Esophagus squamous epithelium (tissue), 5 donors: ENCODE measurements at regions of chr9 and their contacts with region 1.

Region 1: GRCh38 chr9:105157130-105157583 is 87.3 kb upstream of the SLC44A1 start:
- DNase-seq: no peak
- H3K4me3 ChIP-seq: no peak overlapping the region
- H3K27ac ChIP-seq: peak overlapping the region in 3 of 4 donors; percentile 19 to 54 (median 52)
- H3K4me1 ChIP-seq: peaks cover 7 to 23% (median 7%) of the 10 kb centered on the region in 3 donors
- H3K27me3 ChIP-seq: no peaks in the 10 kb centered on the region
- CTCF ChIP-seq: peak; percentile 41 to 67 (median 54)
- POLR2A ChIP-seq: no peak

Region 2: DNA sequence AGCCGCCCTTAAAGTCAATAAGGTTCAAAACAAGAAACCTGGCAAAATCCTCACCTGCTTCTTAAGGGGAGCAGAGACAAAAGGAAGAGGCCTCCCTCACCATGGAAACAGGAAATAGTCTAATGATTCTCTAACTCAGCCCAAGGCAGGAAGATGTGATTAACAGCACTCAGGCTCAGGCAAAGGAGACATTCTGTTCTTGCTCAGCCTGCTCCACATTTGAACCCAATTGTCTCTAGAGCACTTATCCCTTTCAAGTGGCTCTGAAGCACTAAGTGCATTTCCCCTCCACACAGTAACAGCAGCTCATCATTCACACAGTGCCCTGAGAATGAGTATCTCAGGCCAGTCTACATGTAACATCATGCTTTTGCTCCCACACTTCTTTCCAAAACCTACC is 320.9 kb before region 1 on chr9:
- intact Hi-C with region 1: no loop called
- DNase-seq: no peak
- H3K4me3 ChIP-seq: no peak overlapping the region
- H3K27ac ChIP-seq: no peak overlapping the region
- H3K4me1 ChIP-seq: peaks cover 0 to 6% (median 0%) of the 10 kb centered on the region in 3 donors
- H3K27me3 ChIP-seq: no peaks in the 10 kb centered on the region
- CTCF ChIP-seq: no peak
- POLR2A ChIP-seq: no peak

Region 3: GRCh38 chr9:104868687-104869404 is 288.3 kb before region 1 on chr9:
- intact Hi-C with region 1: loop called (anchors 5 kb)
- DNase-seq: no peak
- H3K4me3 ChIP-seq: no peak overlapping the region
- H3K27ac ChIP-seq: peak overlapping the region; percentile 52 to 74 (median 71)
- H3K4me1 ChIP-seq: peaks cover 29 to 75% (median 38%) of the 10 kb centered on the region in 3 donors
- H3K27me3 ChIP-seq: no peaks in the 10 kb centered on the region
- CTCF ChIP-seq: no peak
- POLR2A ChIP-seq: no peak